PC-3 (cell line): ENCODE measurements at regions of chr14 and their contacts with region 1.

Region 1: DNA sequence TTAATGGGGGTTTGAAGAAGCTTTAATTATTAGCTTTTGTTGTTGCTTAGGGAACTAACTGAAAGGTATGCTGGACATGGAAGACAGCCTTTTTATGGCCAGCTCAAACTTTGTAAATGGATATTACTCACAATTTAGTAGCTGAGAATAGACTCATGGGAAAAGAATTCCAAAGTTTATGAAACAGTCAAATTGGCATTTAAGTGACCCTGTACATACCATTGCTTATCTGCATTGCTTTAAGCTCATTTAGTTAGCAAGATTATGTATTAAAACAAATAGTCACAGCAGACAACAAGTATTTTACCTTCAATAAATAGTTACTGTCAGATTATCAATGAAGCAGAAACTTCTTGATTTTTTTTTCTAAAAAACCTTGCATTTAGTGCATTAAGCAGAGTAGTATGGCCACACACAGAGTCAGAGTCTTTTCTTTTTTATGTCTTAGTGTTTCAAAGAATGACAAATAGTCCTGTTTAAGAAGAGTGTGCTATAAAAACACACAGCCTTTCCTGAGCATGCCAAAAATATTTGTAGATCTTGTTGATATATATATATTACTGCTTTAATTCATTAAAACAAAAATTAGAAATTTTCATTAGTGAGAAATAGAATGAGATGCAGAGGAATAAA is 102.2 kb downstream of the TTC6 start:
- DNase-seq: peak; percentile 89
- ATAC-seq: peak; percentile 97
- H3K4me3 ChIP-seq: peak overlapping the region; percentile 24; the same call in 1 of the 2 replicates
- H3K27ac ChIP-seq: peak overlapping the region; percentile 62
- H3K4me1 ChIP-seq: peaks cover 29% of the 10 kb centered on the region
- H3K27me3 ChIP-seq: no peaks in the 10 kb centered on the region
- CTCF ChIP-seq: no peak

Region 2: GRCh38 chr14:37515771-37516170 is 181.8 kb before region 1 on chr14:
- CTCF ChIA-PET with region 1: no interaction called
- POLR2A ChIA-PET with region 1: no interaction called
- intact Hi-C with region 1: no loop called
- DNase-seq: no peak
- ATAC-seq: no peak
- H3K4me3 ChIP-seq: no peak overlapping the region
- H3K27ac ChIP-seq: no peak overlapping the region
- H3K4me1 ChIP-seq: peaks cover 10% of the 10 kb centered on the region
- H3K27me3 ChIP-seq: no peaks in the 10 kb centered on the region
- CTCF ChIP-seq: no peak

Region 3: GRCh38 chr14:37599507-37600368 is 97.9 kb before region 1 on chr14:
- CTCF ChIA-PET with region 1: interaction called, 3 read pairs
- POLR2A ChIA-PET with region 1: no interaction called
- intact Hi-C with region 1: loop called (anchors 2 kb)
- DNase-seq: peak; percentile 63
- ATAC-seq: peak; percentile 4
- H3K4me3 ChIP-seq: peak overlapping the region; percentile 93
- H3K27ac ChIP-seq: peak overlapping the region; percentile 99
- H3K4me1 ChIP-seq: peaks cover 47% of the 10 kb centered on the region
- H3K27me3 ChIP-seq: no peaks in the 10 kb centered on the region
- CTCF ChIP-seq: no peak; the same call in 1 of the 2 replicates

Region 4: DNA sequence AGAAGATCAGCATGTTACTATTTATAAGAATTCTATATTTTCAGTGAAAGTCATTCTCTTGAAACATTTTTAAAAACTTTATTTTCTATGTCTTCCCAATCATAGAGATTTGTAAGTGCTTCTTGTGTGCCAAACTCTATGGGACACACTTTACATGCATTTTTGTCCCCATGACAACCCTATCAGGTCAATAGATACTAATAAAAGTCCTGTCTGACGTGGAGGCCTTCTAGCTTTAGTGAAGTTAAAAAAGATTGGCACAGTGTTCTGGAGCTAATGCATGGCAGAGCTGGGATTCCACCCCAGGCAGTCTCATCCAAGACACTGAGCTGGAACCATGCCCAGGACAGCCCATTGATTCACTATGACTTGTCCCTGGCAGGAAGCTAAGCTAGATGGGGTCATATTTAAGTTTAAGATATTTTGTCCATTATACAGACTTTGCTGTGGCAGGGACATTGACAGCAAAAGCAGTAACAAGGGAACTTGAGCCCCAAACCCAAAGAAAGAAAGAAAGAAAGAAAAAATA is 74.1 kb before region 1 on chr14:
- CTCF ChIA-PET with region 1: no interaction called
- POLR2A ChIA-PET with region 1: interaction called, 5 read pairs
- intact Hi-C with region 1: loop called (anchors 5 kb)
- DNase-seq: peak; percentile 99
- ATAC-seq: peak; percentile 94
- H3K4me3 ChIP-seq: peak overlapping the region; percentile 14; the same call in 1 of the 2 replicates
- H3K27ac ChIP-seq: peak overlapping the region; percentile 94
- H3K4me1 ChIP-seq: peaks cover 29% of the 10 kb centered on the region
- H3K27me3 ChIP-seq: no peaks in the 10 kb centered on the region
- CTCF ChIP-seq: no peak